GM12878 (cell line): ENCODE measurements at regions of chr1 and their contacts with region 1.

Region 1: DNA sequence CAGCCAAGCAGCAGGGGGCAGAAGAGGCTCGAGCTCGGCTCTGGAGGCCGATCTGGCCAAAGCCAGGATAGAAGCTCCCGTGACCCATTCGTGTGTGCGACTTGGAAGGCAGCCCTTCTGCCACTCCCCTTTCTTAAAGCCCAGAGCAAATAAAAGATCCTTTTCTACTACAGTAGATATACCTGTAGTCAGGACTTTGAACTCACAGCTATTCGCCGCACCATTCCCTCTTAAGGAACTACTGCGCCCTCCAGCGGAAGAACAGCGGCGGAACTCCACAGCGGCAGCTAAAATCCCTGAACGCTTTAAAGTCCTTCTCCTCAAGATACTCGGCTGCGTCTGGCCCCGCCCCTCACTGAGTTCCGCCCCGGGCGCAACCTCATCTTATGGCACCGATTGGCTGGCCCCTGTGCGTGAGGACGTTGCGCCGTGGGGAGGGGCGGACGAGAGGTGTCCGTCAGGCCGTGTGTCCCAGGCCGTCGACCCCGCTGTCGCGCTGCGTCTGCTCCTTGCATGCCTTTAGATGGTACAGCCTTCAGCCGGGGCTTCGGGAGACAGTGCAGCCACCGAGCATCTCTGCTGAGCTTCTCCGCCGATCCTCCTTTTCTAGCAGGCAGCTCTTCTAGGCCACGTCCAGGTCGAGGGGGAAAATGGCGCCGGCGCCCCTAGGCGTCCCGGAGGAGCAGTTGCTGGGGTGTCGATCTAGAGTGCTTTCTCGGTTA is at the start of gene LRIG2:
- DNase-seq: peak; percentile 91
- ATAC-seq: peak; percentile 98
- H3K4me3 ChIP-seq: peak within 1 kb of the TSS; percentile 91
- H3K27ac ChIP-seq: peak within 1 kb of the TSS; percentile 85
- H3K4me1 ChIP-seq: peaks cover 4% of the 10 kb centered on the region; the same call in 1 of the 2 replicates
- H3K27me3 ChIP-seq: no peaks in the 10 kb centered on the region
- CTCF ChIP-seq: peak; percentile 41 to 75 (median 65)
- EP300 ChIP-seq: 0 out of 4 replicates have a peak, but pooled peaks of 1 of the 2 experiments have one; percentile 26
- POLR2A ChIP-seq: peak; percentile 99
- RAD21 ChIP-seq: peak; percentile 56
- polyA plus RNA-seq, gene LRIG2: 0.77 to 1.3 TPM

Region 2: DNA sequence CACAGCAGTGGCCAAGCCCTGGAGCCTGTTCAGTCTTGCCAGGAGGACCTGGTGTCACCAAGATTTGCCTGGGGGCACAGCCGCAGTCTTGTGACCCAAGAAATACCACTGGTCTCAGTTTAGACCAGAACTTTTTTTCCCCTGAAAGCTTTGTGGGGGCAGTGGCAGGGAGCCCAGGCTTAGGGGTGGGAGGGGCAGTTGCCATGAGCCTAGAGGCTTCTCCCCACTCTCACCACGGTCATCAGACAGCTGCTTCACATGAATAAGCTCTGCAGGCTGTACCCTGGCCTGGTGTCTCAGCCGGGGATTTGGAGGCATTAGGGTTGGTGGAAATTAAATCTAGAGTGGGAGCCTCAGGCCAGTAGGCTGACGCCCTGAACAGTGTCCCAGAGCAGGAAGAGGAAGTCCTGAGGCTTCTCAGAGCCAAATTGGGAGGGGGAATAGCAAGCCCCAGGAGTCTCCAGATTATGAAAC is 190.6 kb before region 1 on chr1:
- CTCF ChIA-PET with region 1: interaction called, 100 read pairs
- POLR2A ChIA-PET with region 1: interaction called, 3 read pairs
- RAD21 ChIA-PET with region 1: interaction called, 27 read pairs
- SMC1A ChIA-PET with region 1: interaction called, 12 read pairs
- in situ Hi-C with region 1: no loop called
- intact Hi-C with region 1: no loop called
- DNase-seq: no peak
- ATAC-seq: no peak
- H3K4me3 ChIP-seq: no peak overlapping the region
- H3K27ac ChIP-seq: no peak overlapping the region
- H3K4me1 ChIP-seq: no peaks in the 10 kb centered on the region
- H3K27me3 ChIP-seq: no peaks in the 10 kb centered on the region; a peak in 1 of 4 replicates
- CTCF ChIP-seq: no peak
- EP300 ChIP-seq: no peak
- POLR2A ChIP-seq: no peak
- RAD21 ChIP-seq: no peak

Region 3: DNA sequence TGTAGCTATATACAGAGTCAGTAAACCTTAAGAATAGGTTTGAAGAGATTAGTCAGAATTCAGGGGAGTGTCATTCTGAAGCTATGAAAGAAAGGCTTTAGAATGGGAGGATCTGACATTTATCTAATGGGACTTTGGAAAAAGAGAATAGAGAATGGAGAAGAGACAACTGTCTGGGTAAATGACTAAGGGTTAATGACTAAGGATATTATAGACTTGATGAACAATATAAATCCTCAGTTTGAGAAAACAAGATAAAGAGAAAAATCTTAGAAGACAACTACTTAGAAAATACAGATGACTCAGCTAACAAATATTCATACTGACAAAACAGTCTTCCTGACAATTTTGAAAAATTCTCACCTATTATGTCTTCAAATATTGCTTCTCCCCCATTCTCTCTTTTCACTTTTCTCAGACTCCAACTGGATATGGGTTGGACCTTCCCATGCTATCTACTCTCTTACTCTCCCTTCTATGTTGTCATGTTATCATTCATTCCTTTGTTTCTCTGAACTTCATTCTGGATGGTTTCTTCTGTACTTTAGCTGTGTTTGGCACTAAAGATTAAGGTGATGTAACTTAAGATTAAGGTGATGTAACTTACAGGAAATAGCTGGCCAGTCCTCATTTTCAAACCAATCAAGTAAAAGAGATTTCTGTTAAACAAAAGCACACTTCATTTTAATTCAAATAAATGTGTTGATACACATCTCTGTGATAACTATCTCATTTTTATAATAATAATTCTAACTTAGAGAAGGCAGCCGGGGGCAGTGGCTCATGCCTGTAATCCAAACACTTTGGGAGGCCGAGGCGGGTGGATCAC is 137.2 kb before region 1 on chr1:
- CTCF ChIA-PET with region 1: interaction called, 27 read pairs
- POLR2A ChIA-PET with region 1: no interaction called
- RAD21 ChIA-PET with region 1: interaction called, 19 read pairs
- SMC1A ChIA-PET with region 1: interaction called, 9 read pairs
- in situ Hi-C with region 1: no loop called
- intact Hi-C with region 1: no loop called
- DNase-seq: no peak
- ATAC-seq: no peak
- H3K4me3 ChIP-seq: no peak overlapping the region
- H3K27ac ChIP-seq: no peak overlapping the region
- H3K4me1 ChIP-seq: 0 out of 2 replicates have a peak, but pooled peaks cover 4% of the 10 kb centered on the region
- H3K27me3 ChIP-seq: no peaks in the 10 kb centered on the region
- CTCF ChIP-seq: no peak
- EP300 ChIP-seq: no peak
- POLR2A ChIP-seq: no peak
- RAD21 ChIP-seq: no peak

Region 4: GRCh38 chr1:113042285-113043143 is 30.4 kb before region 1 on chr1:
- CTCF ChIA-PET with region 1: interaction called, 61 read pairs
- POLR2A ChIA-PET with region 1: interaction called, 5 read pairs
- RAD21 ChIA-PET with region 1: interaction called, 26 read pairs
- SMC1A ChIA-PET with region 1: interaction called, 27 read pairs
- in situ Hi-C with region 1: no loop called
- intact Hi-C with region 1: no loop called
- DNase-seq: no peak
- ATAC-seq: peak; percentile 92
- H3K4me3 ChIP-seq: 0 out of 2 replicates have a peak overlapping the region, but pooled peaks have one; percentile 26
- H3K27ac ChIP-seq: peak overlapping the region; percentile 34; the same call in 1 of the 2 replicates
- H3K4me1 ChIP-seq: peaks cover 29% of the 10 kb centered on the region
- H3K27me3 ChIP-seq: no peaks in the 10 kb centered on the region
- CTCF ChIP-seq: peak; percentile 59 to 85 (median 66); a peak in 5 of 6 replicates
- EP300 ChIP-seq: no peak
- POLR2A ChIP-seq: no peak
- RAD21 ChIP-seq: peak; percentile 90

Region 5: GRCh38 chr1:113095790-113096455 is 23.0 kb after region 1 on chr1:
- CTCF ChIA-PET with region 1: interaction called, 43 read pairs
- POLR2A ChIA-PET with region 1: interaction called, 3 read pairs
- RAD21 ChIA-PET with region 1: interaction called, 4 read pairs
- SMC1A ChIA-PET with region 1: interaction called, 7 read pairs
- in situ Hi-C with region 1: no loop called
- intact Hi-C with region 1: no loop called
- DNase-seq: no peak
- ATAC-seq: no peak
- H3K4me3 ChIP-seq: no peak overlapping the region
- H3K27ac ChIP-seq: no peak overlapping the region
- H3K4me1 ChIP-seq: no peaks in the 10 kb centered on the region
- H3K27me3 ChIP-seq: no peaks in the 10 kb centered on the region
- CTCF ChIP-seq: no peak
- EP300 ChIP-seq: no peak
- POLR2A ChIP-seq: no peak
- RAD21 ChIP-seq: no peak

Region 6: DNA sequence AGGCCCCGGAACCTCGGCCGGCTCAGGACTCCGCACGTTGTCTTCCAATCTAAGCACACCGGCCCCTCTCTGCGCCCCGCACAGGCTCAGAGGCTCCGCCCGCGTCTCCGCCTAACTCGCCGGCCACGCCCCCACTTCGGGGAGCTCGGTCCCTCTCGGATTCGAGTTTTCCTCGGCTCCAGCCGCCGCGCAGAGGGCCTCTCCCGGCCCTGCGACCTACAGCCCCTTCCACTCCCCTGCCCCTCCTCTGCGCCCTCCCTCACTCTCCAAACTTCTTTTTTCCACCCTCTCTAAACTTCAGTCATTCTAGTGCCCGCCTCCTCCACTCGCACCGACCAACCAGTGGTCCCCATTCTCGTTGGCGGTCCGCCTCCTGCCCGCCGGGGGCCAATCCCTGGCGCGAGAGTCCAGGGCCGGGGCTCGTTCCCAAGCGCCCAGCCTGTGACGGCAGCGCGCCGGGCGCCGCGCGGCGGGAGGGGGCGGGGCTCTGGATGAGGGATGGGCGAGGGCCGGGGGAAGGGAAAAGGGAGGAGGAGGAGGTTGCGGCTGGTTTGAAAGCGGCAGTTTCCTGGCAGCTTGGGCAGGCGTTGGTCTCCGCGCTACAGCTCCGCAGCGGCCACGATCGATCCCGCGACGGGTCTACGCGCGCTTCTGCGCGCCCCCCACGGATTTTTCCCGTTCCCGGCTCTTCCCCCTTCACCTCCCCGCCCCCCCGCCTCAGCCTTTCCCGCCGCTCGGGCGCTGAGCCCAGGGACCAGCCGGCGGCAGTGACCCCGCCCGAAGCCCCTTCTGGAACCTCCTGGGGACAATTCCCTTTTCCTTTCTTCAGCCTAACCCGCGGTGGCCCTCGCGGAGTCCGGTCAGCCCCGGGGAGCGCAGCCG is 317.3 kb after region 1 on chr1 and contains the start of gene MAGI3:
- CTCF ChIA-PET with region 1: interaction called, 10 read pairs
- POLR2A ChIA-PET with region 1: no interaction called
- RAD21 ChIA-PET with region 1: no interaction called
- SMC1A ChIA-PET with region 1: interaction called, 3 read pairs
- in situ Hi-C with region 1: no loop called
- intact Hi-C with region 1: no loop called
- DNase-seq: peak; percentile 68
- ATAC-seq: peak; percentile 99
- H3K4me3 ChIP-seq: peak within 1 kb of the TSS; percentile 68
- H3K27ac ChIP-seq: no peak within 1 kb of the TSS
- H3K4me1 ChIP-seq: peaks cover 2% of the 10 kb centered on the region; the same call in 1 of the 2 replicates
- H3K27me3 ChIP-seq: peaks cover 0 to 10% of the 10 kb centered on the region in 2 experiments; a peak in 2 of 4 replicates
- CTCF ChIP-seq: no peak
- EP300 ChIP-seq: no peak
- POLR2A ChIP-seq: peak; percentile 59
- RAD21 ChIP-seq: no peak
- polyA plus RNA-seq, gene MAGI3: 0.24 to 0.29 TPM